Panc1 (cell line): ENCODE measurements at regions of chr6 and their contacts with region 1.

Region 1: GRCh38 chr6:1596088-1596852 is 13.4 kb upstream of the FOXC1 start:
- DNase-seq: peak; percentile 46
- ATAC-seq: peak; percentile 84
- H3K4me3 ChIP-seq: peak overlapping the region in 1 of 2 experiments; percentile 24; a peak in 1 of 4 replicates
- H3K27ac ChIP-seq: no peak overlapping the region
- H3K4me1 ChIP-seq: peaks cover 7% of the 10 kb centered on the region; the same call in 1 of the 2 replicates
- H3K27me3 ChIP-seq: peaks cover 6% of the 10 kb centered on the region; the same call in 1 of the 2 replicates
- CTCF ChIP-seq: peak; percentile 96

Region 2: DNA sequence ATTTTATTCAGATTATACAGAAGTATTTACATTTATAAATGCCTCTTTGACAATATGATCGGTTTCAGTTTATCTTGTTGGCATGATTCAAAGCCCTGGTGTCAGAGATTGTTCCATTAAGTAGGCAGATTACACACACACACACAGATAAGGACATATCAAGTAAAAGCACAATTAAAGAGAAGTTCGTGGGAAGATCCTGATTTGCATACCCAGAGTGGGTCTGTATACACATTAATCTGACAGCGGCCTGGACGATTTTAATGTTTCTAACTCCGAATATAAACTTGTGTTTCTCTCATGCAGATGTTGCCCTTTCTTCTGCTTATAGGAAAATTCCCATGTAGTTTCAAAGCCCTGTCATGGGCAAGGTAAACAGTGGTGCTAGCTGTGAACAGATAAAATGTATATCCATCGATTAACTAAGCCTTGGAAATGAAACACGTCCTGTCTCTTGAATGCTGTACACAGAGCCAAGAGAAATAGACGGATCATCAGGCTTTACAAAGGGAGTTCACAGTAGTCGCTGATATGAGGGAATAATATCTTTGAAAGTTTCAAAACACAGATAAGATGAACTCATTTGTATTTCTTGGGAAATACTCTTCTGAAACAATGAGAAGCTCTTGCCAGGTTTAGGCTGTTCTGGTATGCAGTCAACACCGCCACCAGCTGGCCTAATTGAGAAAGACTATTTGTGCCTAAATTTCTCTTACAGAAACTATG is 757.3 kb after region 1 on chr6:
- CTCF ChIA-PET with region 1: interaction called, 5 read pairs
- POLR2A ChIA-PET with region 1: no interaction called
- in situ Hi-C with region 1: no loop called
- intact Hi-C with region 1: loop called (anchors 2 kb)
- DNase-seq: peak; percentile 39
- ATAC-seq: peak; percentile 82
- H3K4me3 ChIP-seq: no peak overlapping the region
- H3K27ac ChIP-seq: no peak overlapping the region
- H3K4me1 ChIP-seq: no peaks in the 10 kb centered on the region
- H3K27me3 ChIP-seq: no peaks in the 10 kb centered on the region
- CTCF ChIP-seq: peak; percentile 82

Region 3: DNA sequence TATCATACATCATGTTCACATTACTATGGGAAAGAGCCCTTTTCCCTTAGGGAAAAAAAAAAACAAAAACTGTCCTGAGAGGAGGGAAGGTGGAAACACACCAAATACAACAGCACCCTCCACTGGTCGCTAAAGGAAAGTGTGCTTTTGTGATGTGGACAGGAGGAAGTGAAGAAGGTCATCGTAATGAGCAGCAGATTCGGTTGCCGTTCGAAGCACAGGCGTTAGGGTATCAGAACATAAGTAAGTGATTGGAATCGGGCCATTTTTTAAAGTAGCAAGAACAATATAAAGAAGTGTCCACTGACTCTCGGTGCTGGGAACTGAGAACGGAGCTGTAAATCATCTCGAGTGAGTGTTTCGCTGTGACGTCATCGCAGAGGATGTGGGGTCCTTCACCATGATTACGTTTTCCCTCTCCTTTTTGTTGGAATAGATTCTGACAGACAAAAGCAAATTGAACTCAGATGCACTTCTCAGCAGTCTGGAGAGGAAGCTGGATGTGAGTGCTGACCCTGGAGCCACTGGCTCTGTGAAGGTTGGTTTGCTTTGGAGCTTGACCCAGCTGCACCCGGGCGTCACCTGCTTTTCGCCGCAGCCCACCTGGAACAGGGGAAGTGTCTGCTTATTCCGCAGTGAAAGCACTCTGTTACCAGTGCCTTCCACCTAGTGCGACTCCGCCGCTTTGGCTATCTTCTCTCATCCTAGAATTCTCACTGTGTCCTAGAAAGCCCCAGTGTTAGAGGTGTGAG is 852.7 kb after region 1 on chr6:
- CTCF ChIA-PET with region 1: interaction called, 3 read pairs
- POLR2A ChIA-PET with region 1: no interaction called
- in situ Hi-C with region 1: no loop called
- intact Hi-C with region 1: loop called (anchors 2 kb)
- DNase-seq: peak; percentile 50
- ATAC-seq: peak; percentile 89
- H3K4me3 ChIP-seq: peak overlapping the region; percentile 13 to 40; a peak in 3 of 4 replicates
- H3K27ac ChIP-seq: no peak overlapping the region
- H3K4me1 ChIP-seq: no peaks in the 10 kb centered on the region
- H3K27me3 ChIP-seq: no peaks in the 10 kb centered on the region; the same call in none of the 2 replicates
- CTCF ChIP-seq: peak; percentile 84

Region 4: DNA sequence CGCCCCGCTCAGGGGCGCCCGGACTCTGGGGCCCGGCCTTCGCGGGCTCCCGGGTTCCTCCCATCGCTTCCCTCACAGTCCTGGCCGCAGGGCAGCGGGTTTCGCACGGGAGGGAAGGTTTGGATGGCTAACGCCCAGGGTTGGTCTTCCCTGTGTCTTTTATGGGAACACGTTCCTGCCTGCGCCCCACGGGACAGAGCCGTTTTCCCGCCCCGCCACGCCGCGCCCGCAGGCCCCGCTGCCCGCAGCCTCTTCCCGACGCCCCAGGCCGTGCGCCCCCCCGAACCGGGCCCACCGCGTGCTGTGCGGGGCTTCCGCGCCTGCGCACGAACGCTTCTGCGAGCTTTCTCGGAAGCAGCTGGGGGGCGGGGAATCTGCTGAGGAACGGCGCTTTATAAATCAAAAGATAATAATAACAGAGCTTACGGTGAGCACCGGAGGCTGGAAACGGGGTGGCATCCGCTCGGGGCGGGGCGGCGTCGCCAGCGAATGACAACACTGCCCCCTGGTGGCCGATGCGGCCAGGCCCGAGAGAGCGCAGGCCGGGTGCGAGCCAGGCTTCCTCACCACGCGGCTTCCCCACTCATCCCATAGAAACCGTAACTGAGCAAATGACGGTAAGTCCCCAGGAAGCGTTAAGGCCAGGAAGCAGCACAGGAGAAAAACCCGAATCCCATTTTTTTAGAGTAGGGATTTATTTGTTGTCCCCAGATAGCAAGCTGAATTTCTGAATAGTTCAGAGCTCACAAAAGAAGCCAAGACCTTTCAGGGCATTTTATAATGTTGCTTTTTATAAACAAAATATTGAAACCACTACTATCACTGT is 1038.1 kb after region 1 on chr6:
- CTCF ChIA-PET with region 1: no interaction called
- POLR2A ChIA-PET with region 1: no interaction called
- in situ Hi-C with region 1: no loop called
- intact Hi-C with region 1: loop called (anchors 10 kb)
- DNase-seq: peak; percentile 51
- ATAC-seq: peak; percentile 96
- H3K4me3 ChIP-seq: peak overlapping the region; percentile 43 to 45
- H3K27ac ChIP-seq: peak overlapping the region; percentile 77
- H3K4me1 ChIP-seq: peaks cover 6% of the 10 kb centered on the region
- H3K27me3 ChIP-seq: no peaks in the 10 kb centered on the region
- CTCF ChIP-seq: peak; percentile 98

Region 5: GRCh38 chr6:2695454-2696095 is 1099.3 kb after region 1 on chr6:
- CTCF ChIA-PET with region 1: no interaction called
- POLR2A ChIA-PET with region 1: no interaction called
- in situ Hi-C with region 1: no loop called
- intact Hi-C with region 1: loop called (anchors 5 kb)
- DNase-seq: peak; percentile 22
- ATAC-seq: peak; percentile 82
- H3K4me3 ChIP-seq: no peak overlapping the region
- H3K27ac ChIP-seq: no peak overlapping the region
- H3K4me1 ChIP-seq: no peaks in the 10 kb centered on the region
- H3K27me3 ChIP-seq: no peaks in the 10 kb centered on the region; the same call in 1 of the 2 replicates
- CTCF ChIP-seq: peak; percentile 52; the same call in 1 of the 2 replicates

Region 6: GRCh38 chr6:2744209-2744771 is 1148.0 kb after region 1 on chr6:
- CTCF ChIA-PET with region 1: no interaction called
- POLR2A ChIA-PET with region 1: no interaction called
- in situ Hi-C with region 1: no loop called
- intact Hi-C with region 1: loop called (anchors 2 kb)
- DNase-seq: no peak
- ATAC-seq: peak; percentile 69; the same call in 1 of the 2 replicates
- H3K4me3 ChIP-seq: no peak overlapping the region
- H3K27ac ChIP-seq: no peak overlapping the region
- H3K4me1 ChIP-seq: no peaks in the 10 kb centered on the region
- H3K27me3 ChIP-seq: no peaks in the 10 kb centered on the region
- CTCF ChIP-seq: peak; percentile 57